Activated CD4-positive, alpha-beta memory T cell treated with anti-CD3 and anti-CD28 coated beads for 36 hours (primary cell): ENCODE measurements at regions of chr15 and their contacts with region 1.

Region 1: DNA sequence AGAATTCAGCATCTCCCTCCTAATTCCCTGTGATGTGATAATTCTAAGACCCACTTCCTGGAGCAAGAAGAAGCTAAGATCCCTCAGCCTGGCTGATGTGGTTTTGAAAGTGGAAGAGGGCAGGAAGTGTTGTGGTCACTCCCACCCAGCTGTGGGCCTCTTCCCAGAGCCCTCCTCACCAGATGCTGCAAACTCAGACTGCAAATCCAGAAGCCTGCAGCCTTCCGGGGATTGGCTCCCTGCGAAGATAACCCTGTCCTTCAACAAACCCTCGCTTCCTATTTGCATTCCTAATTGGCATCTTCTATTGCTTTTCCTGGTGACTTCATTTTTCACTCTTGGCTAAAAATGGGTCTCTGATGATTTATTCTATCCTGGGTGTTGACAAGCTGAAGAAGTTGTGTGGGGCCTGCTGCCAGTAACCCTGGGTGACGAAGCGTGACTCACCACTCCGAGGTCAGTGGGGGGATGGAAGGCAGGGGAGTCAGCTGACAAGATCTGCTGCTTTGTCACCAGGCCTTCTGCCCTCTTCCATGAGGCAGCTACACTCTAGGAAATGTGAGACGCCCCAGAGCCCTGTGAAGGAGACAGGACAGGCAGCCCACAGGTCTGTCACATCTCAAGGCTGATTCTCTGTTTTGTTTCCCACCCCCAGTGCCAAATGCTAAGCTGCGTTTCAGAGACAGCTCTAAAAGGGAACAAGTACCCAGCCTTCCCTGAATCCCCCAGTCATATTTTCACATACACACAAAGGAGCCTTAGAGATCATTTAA is 99.7 kb upstream of the LIPC start:
- DNase-seq: peak; percentile 96
- H3K4me3 Mint-ChIP-seq: peak overlapping the region; percentile 23
- H3K27ac Mint-ChIP-seq: peak overlapping the region; percentile 91
- H3K4me1 Mint-ChIP-seq: peaks cover 41% of the 10 kb centered on the region
- H3K27me3 Mint-ChIP-seq: no peaks in the 10 kb centered on the region

Region 2: DNA sequence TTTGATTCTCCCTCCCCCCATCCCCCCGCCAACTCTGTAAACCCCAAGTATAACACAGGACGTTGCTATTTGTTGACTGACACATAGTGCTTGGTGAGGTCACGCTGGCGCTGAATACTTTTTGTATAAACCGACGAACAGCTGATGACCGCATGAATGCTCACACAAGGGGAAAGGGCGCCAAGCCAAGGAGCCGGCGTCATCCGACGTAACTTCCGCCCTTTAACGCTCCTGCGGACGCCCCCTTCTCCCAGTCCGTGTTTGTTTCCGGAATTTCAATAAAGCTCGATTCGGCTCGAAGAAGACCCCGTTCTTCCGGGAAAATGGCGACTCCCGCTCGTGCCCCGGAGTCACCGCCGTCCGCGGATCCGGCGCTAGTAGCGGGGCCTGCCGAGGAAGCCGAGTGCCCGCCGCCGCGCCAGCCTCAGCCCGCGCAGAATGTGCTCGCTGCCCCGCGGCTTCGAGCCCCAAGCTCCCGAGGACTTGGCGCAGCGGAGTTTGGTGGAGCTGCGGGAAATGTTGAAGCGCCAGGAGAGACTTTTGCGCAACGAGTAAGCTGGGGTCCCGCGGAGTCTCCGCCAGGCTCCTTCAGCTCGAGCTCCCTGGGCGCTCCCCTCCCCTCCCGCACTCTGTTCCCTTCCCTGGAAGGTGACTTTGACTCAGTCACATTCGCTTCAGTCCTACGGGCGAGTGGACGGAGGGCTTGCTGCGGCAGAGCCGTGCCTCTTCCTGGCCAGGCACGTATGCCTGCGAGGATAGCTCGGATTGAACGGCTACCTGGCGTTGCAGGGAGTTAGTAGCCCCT is 625.5 kb before region 1 on chr15 and contains the start of gene POLR2M:
- CTCF ChIA-PET with region 1: no interaction called
- POLR2A ChIA-PET with region 1: no interaction called
- intact Hi-C with region 1: loop called (anchors 10 kb)
- DNase-seq: peak; percentile 96
- H3K4me3 Mint-ChIP-seq: peak within 1 kb of the TSS; percentile 84
- H3K27ac Mint-ChIP-seq: peak within 1 kb of the TSS; percentile 88
- H3K4me1 Mint-ChIP-seq: peaks cover 71% of the 10 kb centered on the region
- H3K27me3 Mint-ChIP-seq: no peaks in the 10 kb centered on the region
- total RNA-seq, gene POLR2M: 84.1 to 86.5 TPM

Region 3: GRCh38 chr15:58357521-58358476 is 25.7 kb after region 1 on chr15:
- CTCF ChIA-PET with region 1: no interaction called
- POLR2A ChIA-PET with region 1: interaction called, 9 read pairs
- intact Hi-C with region 1: loop called (anchors 1 kb)
- DNase-seq: peak; percentile 61
- H3K4me3 Mint-ChIP-seq: no peak overlapping the region
- H3K27ac Mint-ChIP-seq: peak overlapping the region; percentile 7
- H3K4me1 Mint-ChIP-seq: peaks cover 30% of the 10 kb centered on the region
- H3K27me3 Mint-ChIP-seq: peaks cover 3% of the 10 kb centered on the region

Region 4: DNA sequence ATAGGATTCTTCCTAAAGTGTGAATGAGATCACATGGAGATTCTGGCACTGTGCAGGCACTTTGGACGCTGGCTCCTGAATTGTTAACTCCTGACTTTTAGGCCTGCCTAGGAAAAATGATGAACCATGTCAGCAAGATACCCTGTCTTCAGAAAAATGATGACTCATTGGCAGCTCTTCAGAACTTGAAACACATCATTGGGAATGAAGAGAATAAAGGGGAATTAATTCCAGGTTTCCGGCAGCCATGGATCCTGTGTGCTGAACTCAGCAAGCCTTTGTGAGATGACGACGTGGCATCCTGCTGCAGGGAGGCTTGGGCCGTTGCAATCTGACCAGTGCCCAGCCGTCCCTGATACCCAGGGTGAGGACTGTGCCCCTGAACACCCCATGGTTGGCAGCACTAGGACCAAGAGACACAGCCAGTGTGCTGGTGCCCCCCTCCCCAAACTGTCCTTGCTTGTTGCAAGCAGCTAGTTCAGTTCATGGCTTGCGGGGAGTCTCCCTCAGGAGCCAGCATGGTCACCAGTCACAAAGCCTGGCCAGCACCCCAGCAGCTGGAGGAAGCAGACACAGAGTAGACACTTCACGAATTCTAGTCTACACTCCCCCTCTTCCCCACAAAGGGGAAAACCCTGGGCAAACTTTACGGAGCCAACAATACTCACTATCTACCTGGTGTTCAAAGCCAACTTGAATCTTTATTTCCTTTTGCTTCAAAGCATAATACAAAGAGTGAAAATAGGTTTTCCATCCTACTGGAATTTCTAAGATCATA is 91.9 kb after region 1 on chr15:
- CTCF ChIA-PET with region 1: no interaction called
- POLR2A ChIA-PET with region 1: no interaction called
- intact Hi-C with region 1: loop called (anchors 5 kb)
- DNase-seq: peak; percentile 35
- H3K4me3 Mint-ChIP-seq: no peak overlapping the region
- H3K27ac Mint-ChIP-seq: no peak overlapping the region
- H3K4me1 Mint-ChIP-seq: peaks cover 9% of the 10 kb centered on the region
- H3K27me3 Mint-ChIP-seq: no peaks in the 10 kb centered on the region

Region 5: DNA sequence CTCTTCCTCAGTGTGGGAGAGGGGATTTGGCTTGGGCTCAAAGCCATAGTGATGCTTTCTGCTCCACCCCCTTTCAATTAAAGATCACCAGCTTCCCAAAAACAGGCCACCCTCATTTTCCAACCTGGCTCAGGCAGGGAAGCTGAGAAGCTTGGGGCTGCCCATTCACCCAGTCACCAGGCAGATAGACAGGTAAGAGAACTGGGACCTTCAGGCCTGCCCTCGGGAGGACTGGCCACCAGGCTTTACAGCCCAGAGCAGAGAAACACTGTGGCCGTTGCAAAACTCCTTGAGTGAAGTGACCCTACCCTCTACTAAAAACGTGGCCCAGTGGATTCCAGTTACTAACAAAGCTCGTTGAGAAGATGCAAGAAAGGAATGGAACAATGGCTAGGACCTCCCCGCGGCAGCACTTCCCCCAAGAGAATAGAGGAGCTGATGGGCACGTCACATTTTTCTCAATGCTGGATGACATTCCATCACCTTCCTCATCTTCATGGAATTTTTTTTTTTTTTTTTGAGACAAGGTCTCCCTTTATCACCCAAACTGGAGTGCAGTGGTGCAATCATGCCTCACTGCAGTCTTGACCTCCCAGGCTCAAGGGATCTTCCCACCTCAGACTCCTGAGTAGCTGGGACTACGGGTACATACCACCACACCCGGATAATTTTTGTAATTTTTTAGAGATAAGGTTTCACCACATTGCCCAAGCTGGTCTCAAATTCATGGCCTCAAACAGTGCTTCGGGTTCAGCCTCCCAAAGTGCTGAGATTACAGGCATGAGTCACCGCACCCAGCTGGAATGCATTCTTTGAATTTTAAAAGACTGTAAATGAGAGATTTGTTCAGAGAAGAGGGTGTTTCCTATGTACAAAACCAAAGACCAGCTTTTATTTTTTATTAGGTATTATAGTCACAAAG is 137.6 kb after region 1 on chr15:
- CTCF ChIA-PET with region 1: no interaction called
- POLR2A ChIA-PET with region 1: interaction called, 3 read pairs
- intact Hi-C with region 1: loop called (anchors 5 kb)
- DNase-seq: no peak
- H3K4me3 Mint-ChIP-seq: no peak overlapping the region
- H3K27ac Mint-ChIP-seq: no peak overlapping the region
- H3K4me1 Mint-ChIP-seq: peaks cover 41% of the 10 kb centered on the region
- H3K27me3 Mint-ChIP-seq: no peaks in the 10 kb centered on the region

Region 6: GRCh38 chr15:58770857-58771620 is 438.9 kb after region 1 on chr15 and contains the start of gene MINDY2:
- CTCF ChIA-PET with region 1: no interaction called
- POLR2A ChIA-PET with region 1: interaction called, 4 read pairs
- intact Hi-C with region 1: loop called (anchors 2 kb)
- DNase-seq: peak; percentile 97
- H3K4me3 Mint-ChIP-seq: no peak within 1 kb of the TSS
- H3K27ac Mint-ChIP-seq: peak within 1 kb of the TSS; percentile 73
- H3K4me1 Mint-ChIP-seq: peaks cover 9% of the 10 kb centered on the region
- H3K27me3 Mint-ChIP-seq: no peaks in the 10 kb centered on the region
- total RNA-seq, gene MINDY2: 8.0 to 11.6 TPM